ENCODE measurements at regions of chr1 and their contacts with region 1.

Region 1: DNA sequence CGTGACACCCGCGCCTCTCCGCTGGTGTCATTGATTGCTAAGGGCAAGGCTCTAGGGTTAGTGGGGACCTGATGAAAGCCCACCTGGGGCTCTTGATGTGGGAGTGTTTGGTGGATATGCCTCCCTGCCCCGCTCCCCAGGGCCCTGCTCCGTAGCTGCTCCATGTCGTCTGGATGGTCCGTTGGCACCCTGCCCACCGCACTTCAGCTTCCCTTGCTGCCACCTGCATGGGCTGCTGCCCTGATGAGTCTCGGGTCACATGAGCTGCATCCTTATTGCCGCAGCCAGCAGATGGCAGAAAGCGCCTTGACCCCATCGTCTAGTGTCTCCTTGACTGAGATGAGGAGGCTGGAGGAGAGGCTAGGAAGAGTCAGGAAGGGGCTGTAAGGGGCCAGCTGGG is 439.4 kb downstream of the CAMTA1 start:
- DNase-seq: peak; percentile 37
- ATAC-seq: peak; percentile 91
- H3K4me3 ChIP-seq: no peak overlapping the region
- H3K27ac ChIP-seq: no peak overlapping the region
- H3K4me1 ChIP-seq: peaks cover 9 to 24% of the 10 kb centered on the region in 2 experiments
- H3K27me3 ChIP-seq: no peaks in the 10 kb centered on the region
- CTCF ChIP-seq: peak; percentile 55 to 80 (median 71)
- POLR2A ChIP-seq: no peak
- RAD21 ChIP-seq: peak; percentile 96

Region 2: DNA sequence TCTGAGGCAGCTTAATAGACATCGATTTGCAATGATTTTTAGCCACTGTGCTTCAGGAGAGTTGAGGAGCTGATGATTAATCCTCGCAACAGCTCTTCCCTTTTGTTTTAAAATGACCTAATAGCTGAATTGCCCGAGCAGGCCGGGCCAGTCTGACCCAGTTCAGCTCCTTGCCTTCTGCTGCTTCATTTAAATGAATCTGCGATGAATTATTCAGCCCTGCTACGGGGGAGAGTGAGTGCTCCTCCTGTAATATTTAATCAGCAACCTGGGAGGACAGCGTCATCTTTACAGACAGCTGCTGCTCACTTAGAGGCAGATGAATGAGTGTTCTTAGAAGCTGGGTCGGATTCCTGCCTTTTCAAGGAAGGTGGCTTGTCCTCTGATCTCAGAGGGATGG is 114.3 kb before region 1 on chr1:
- CTCF ChIA-PET with region 1: no interaction called
- POLR2A ChIA-PET with region 1: no interaction called
- RAD21 ChIA-PET with region 1: no interaction called
- intact Hi-C with region 1: no loop called
- DNase-seq: no peak
- ATAC-seq: no peak
- H3K4me3 ChIP-seq: no peak overlapping the region
- H3K27ac ChIP-seq: no peak overlapping the region
- H3K4me1 ChIP-seq: no peaks in the 10 kb centered on the region
- H3K27me3 ChIP-seq: peaks cover 52% of the 10 kb centered on the region
- CTCF ChIP-seq: no peak
- POLR2A ChIP-seq: no peak
- RAD21 ChIP-seq: no peak

Region 3: GRCh38 chr1:7470880-7471638 is 246.4 kb after region 1 on chr1:
- CTCF ChIA-PET with region 1: interaction called, 4 read pairs
- POLR2A ChIA-PET with region 1: no interaction called
- RAD21 ChIA-PET with region 1: no interaction called
- intact Hi-C with region 1: loop called (anchors 10 kb)
- DNase-seq: peak; percentile 90
- ATAC-seq: peak; percentile 90
- H3K4me3 ChIP-seq: peak overlapping the region in 1 of 2 experiments; percentile 25; a peak in 2 of 4 replicates
- H3K27ac ChIP-seq: peak overlapping the region; percentile 39
- H3K4me1 ChIP-seq: peaks cover 23 to 38% of the 10 kb centered on the region in 2 experiments
- H3K27me3 ChIP-seq: no peaks in the 10 kb centered on the region
- CTCF ChIP-seq: no peak
- POLR2A ChIP-seq: no peak
- RAD21 ChIP-seq: no peak

Region 4: DNA sequence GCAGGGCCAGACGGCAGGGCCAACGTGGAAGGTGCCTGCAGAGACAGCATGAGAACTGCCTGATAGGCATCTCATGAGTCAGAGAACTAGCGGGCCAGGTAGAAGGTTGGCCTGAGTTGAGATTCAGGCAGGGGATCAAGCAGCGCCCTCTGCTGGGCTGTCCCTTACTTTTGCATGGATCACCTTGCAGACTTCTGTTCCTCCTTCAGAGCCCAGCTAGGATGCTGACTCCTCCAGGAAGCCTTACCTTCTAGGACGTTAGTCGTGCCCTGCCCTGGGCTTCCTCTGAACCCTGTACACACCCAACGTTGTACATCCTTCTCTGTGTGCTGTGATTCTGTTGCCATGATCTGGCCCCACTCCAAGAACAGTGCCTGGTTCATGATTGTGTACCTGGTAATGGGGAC is 315.1 kb after region 1 on chr1:
- CTCF ChIA-PET with region 1: interaction called, 6 read pairs
- POLR2A ChIA-PET with region 1: no interaction called
- RAD21 ChIA-PET with region 1: interaction called in 1 of 2 experiments, 3 read pairs
- intact Hi-C with region 1: loop called (anchors 1 kb)
- DNase-seq: peak; percentile 67
- ATAC-seq: peak; percentile 92
- H3K4me3 ChIP-seq: no peak overlapping the region
- H3K27ac ChIP-seq: no peak overlapping the region
- H3K4me1 ChIP-seq: peaks cover 0 to 20% of the 10 kb centered on the region in 2 experiments; a peak in 2 of 4 replicates
- H3K27me3 ChIP-seq: no peaks in the 10 kb centered on the region
- CTCF ChIP-seq: peak; percentile 71 to 87 (median 73); a peak in 5 of 6 replicates
- POLR2A ChIP-seq: no peak
- RAD21 ChIP-seq: peak; percentile 88

Measured in HCT116 (cell line).